Activated T-helper 2 cell treated with anti-CD3 and anti-CD28 coated beads, Interferon-gamma antibody, Interleukin-2, Interleukin-4, amounts not matched to agents 10 μg/mL and 5 μg/mL and 100 μg/mL, durations not matched to agents 14 hours and 24 hours and 36 hours (primary cell): ENCODE measurements at regions of chr12 and their contacts with region 1.

Region 1: GRCh38 chr12:120961604-120962531 is 16.5 kb upstream of the HNF1A start:
- DNase-seq: no peak
- H3K4me3 Mint-ChIP-seq: no peak overlapping the region
- H3K27ac Mint-ChIP-seq: peak overlapping the region; percentile 78
- H3K4me1 Mint-ChIP-seq: peaks cover 38% of the 10 kb centered on the region
- H3K27me3 Mint-ChIP-seq: no peaks in the 10 kb centered on the region

Region 2: GRCh38 chr12:120820885-120821510 is 140.9 kb before region 1 on chr12:
- intact Hi-C with region 1: loop called (anchors 1 kb)
- DNase-seq: peak; percentile 30
- H3K4me3 Mint-ChIP-seq: no peak overlapping the region
- H3K27ac Mint-ChIP-seq: peak overlapping the region; percentile 67
- H3K4me1 Mint-ChIP-seq: peaks cover 29% of the 10 kb centered on the region
- H3K27me3 Mint-ChIP-seq: no peaks in the 10 kb centered on the region

Region 3: DNA sequence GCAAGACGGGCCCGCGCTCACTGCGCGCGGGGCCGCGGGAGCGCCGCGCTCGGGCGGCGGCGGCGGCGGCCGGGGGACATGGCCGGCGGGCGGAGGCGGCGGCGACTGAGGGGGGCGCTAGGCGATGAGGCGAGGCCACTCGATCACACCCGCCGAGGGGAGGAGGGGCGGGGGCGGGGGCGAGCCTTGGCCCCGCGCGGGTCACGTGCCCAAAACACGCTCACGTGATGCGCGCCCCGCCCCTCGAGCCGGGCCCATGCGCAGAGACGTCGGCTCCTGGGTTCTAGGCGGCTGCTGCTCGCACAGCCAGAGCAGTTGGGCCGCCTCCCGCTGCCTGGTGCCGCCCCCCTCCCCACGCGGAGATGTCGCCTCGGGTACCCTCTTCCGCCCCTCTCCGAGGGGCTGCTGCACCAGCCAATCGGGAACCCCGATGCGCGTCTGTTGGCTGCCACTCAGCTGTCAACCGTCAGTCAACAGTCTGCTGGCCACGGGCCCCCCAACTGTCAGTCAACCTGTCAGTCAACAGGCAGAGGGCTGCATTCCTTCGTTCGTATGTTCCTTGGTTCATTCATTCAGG is 57.6 kb before region 1 on chr12 and contains the start of gene SPPL3:
- intact Hi-C with region 1: loop called (anchors 5 kb)
- DNase-seq: peak; percentile 88
- H3K4me3 Mint-ChIP-seq: peak within 1 kb of the TSS; percentile 97
- H3K27ac Mint-ChIP-seq: peak within 1 kb of the TSS; percentile 86
- H3K4me1 Mint-ChIP-seq: peaks cover 22% of the 10 kb centered on the region
- H3K27me3 Mint-ChIP-seq: no peaks in the 10 kb centered on the region
- total RNA-seq, gene SPPL3: 33.4 and 38.2 TPM in 2 replicates

Region 4: DNA sequence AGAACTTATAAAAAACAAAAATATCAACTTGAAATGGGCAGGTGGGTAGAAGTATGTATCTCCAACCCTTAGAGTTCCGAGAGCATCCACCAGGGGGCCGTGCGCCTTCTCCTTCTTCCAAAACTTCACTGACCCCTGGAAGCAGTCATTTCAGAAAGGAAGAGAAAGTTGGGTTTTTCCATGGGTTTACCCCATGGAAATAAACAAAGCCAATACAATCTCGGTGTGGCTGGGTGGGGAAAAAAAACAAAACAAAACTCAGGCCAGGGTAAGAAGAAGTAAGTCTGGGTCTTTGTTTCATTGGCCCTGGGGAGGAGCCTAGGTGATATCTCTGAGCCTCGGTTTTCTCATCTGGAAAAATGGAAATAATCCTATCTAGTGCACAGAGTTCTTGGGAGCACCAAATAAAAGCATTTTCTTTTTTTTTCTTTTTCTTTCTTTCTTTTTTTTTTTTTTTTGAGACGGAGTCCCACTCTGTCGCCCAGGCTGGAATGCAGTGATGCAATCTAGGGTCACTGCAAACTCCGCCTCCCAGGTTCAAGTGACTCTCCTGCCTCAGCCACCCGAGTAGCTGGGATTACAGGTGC is 17.1 kb before region 1 on chr12:
- intact Hi-C with region 1: loop called (anchors 1 kb)
- DNase-seq: peak; percentile 46
- H3K4me3 Mint-ChIP-seq: no peak overlapping the region
- H3K27ac Mint-ChIP-seq: peak overlapping the region; percentile 20
- H3K4me1 Mint-ChIP-seq: peaks cover 8% of the 10 kb centered on the region
- H3K27me3 Mint-ChIP-seq: peaks cover 6% of the 10 kb centered on the region

Region 5: DNA sequence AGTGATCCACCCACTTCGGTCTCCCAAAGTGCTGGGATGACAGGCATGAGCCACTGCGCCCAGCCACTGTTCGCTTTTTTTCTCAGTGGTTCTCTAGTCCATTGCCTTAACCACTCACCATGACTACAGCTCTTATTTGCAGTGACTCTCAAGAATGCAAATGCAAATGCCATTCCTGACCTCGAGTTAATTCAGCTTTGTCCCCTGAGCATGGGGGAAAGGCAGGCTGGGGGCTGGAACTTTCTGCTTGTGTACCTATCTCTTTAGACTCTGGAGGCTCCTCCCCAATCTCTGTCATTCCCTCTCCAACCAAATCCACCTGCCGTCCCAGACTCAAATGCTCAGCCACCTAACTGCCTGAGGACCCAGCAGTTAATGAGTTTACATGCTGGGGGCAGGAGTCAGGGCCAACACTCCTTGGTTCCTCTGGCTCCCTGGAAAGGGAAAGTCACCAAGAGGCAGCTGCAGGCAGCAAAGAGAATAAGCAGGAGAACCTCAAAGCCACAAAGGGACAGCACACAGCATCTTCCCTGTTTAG is 11.1 kb after region 1 on chr12:
- intact Hi-C with region 1: no loop called
- DNase-seq: no peak
- H3K4me3 Mint-ChIP-seq: no peak overlapping the region
- H3K27ac Mint-ChIP-seq: no peak overlapping the region
- H3K4me1 Mint-ChIP-seq: peaks cover 5% of the 10 kb centered on the region
- H3K27me3 Mint-ChIP-seq: no peaks in the 10 kb centered on the region